CD4-positive, alpha-beta T cell (primary cell): ENCODE measurements at regions of chr4 and their contacts with region 1.

Region 1: DNA sequence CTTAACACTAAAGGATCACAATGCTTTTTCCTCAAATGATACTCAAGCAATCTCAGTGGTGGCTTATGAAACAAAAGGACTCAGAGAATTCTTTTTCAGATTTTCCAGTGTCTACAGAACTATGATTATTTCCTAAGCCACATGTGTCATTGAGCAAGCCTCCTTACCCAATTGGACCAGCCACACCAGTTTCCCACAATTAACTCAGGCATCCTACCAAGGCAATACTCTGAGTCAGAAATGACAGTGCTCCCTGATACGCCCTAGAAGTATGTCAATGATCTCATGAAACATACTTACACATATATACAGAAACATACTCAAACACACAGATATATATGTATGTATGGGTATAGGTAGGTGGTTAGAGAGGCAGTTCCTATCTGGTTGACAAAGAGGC is 4.8 kb downstream of the ADAMTS3 start:
- DNase-seq: no peak
- ATAC-seq: no peak
- H3K4me3 ChIP-seq: no peak overlapping the region
- H3K4me3 Mint-ChIP-seq: no peak overlapping the region
- H3K27ac ChIP-seq: no peak overlapping the region
- H3K27ac Mint-ChIP-seq: no peak overlapping the region
- H3K4me1 ChIP-seq: peaks cover 13% of the 10 kb centered on the region
- H3K4me1 Mint-ChIP-seq: peaks cover 15% of the 10 kb centered on the region
- H3K27me3 ChIP-seq: peaks cover 21 to 38% of the 10 kb centered on the region in 2 experiments
- H3K27me3 Mint-ChIP-seq: peaks cover 56% of the 10 kb centered on the region
- CTCF ChIP-seq: no peak

Region 2: GRCh38 chr4:72552447-72552846 is 11.7 kb before region 1 on chr4:
- CTCF ChIA-PET with region 1: no interaction called
- POLR2A ChIA-PET with region 1: no interaction called
- intact Hi-C with region 1: loop called in 1 of 2 experiments (anchors 1 kb)
- DNase-seq: no peak
- ATAC-seq: no peak
- H3K4me3 ChIP-seq: no peak overlapping the region
- H3K4me3 Mint-ChIP-seq: no peak overlapping the region
- H3K27ac ChIP-seq: no peak overlapping the region
- H3K27ac Mint-ChIP-seq: no peak overlapping the region
- H3K4me1 ChIP-seq: no peaks in the 10 kb centered on the region
- H3K4me1 Mint-ChIP-seq: no peaks in the 10 kb centered on the region
- H3K27me3 ChIP-seq: peaks cover 0 to 5% of the 10 kb centered on the region in 2 experiments
- H3K27me3 Mint-ChIP-seq: no peaks in the 10 kb centered on the region
- CTCF ChIP-seq: no peak